ENCODE measurements at regions of chr16 and their contacts with region 1.

Region 1: GRCh38 chr16:21158208-21159110 is at the start of gene LDAF1:
- DNase-seq: peak; percentile 66 to 89
- H3K4me3 ChIP-seq: peak within 1 kb of the TSS; percentile 87
- H3K27ac ChIP-seq: peak within 1 kb of the TSS; percentile 74
- H3K4me1 ChIP-seq: peaks cover 16% of the 10 kb centered on the region
- H3K27me3 ChIP-seq: no peaks in the 10 kb centered on the region
- CTCF ChIP-seq: no peak
- total RNA-seq, gene LDAF1: 47.6 and 69.9 TPM in 2 replicates

Region 2: GRCh38 chr16:20900299-20901067 is 258.0 kb before region 1 on chr16 and contains the starts of genes DCUN1D3 and LYRM1:
- CTCF ChIA-PET with region 1: no interaction called
- POLR2A ChIA-PET with region 1: interaction called, 3 read pairs
- intact Hi-C with region 1: loop called (anchors 5 kb)
- DNase-seq: peak; percentile 90 to 94
- H3K4me3 ChIP-seq: peak within 1 kb of the TSS; percentile 84
- H3K27ac ChIP-seq: peak within 1 kb of the TSS; percentile 99
- H3K4me1 ChIP-seq: peaks cover 65% of the 10 kb centered on the region
- H3K27me3 ChIP-seq: no peaks in the 10 kb centered on the region
- CTCF ChIP-seq: no peak
- total RNA-seq, gene DCUN1D3: 11.8 and 14.6 TPM in 2 replicates
- total RNA-seq, gene LYRM1: 32.2 and 51.7 TPM in 2 replicates

Region 3: GRCh38 chr16:21184834-21185233 is 26.4 kb after region 1 on chr16:
- CTCF ChIA-PET with region 1: interaction called, 3 read pairs
- POLR2A ChIA-PET with region 1: no interaction called
- intact Hi-C with region 1: loop called (anchors 2 kb)
- DNase-seq: no peak
- H3K4me3 ChIP-seq: no peak overlapping the region
- H3K27ac ChIP-seq: no peak overlapping the region
- H3K4me1 ChIP-seq: peaks cover 11% of the 10 kb centered on the region; the same call in 1 of the 2 replicates
- H3K27me3 ChIP-seq: no peaks in the 10 kb centered on the region
- CTCF ChIP-seq: no peak

Region 4: GRCh38 chr16:21554795-21555585 is 396.5 kb after region 1 on chr16:
- CTCF ChIA-PET with region 1: no interaction called
- POLR2A ChIA-PET with region 1: no interaction called
- intact Hi-C with region 1: loop called (anchors 2 kb)
- DNase-seq: peak; percentile 68 to 93
- H3K4me3 ChIP-seq: peak overlapping the region; percentile 36; the same call in 1 of the 2 replicates
- H3K27ac ChIP-seq: no peak overlapping the region
- H3K4me1 ChIP-seq: 0 out of 2 replicates have a peak, but pooled peaks cover 3% of the 10 kb centered on the region
- H3K27me3 ChIP-seq: no peaks in the 10 kb centered on the region
- CTCF ChIP-seq: peak; percentile 99

Region 5: GRCh38 chr16:22321339-22322001 is 1163.0 kb after region 1 on chr16:
- CTCF ChIA-PET with region 1: interaction called, 7 read pairs
- POLR2A ChIA-PET with region 1: no interaction called
- intact Hi-C with region 1: loop called (anchors 1 kb)
- DNase-seq: peak; percentile 54 to 59
- H3K4me3 ChIP-seq: no peak overlapping the region
- H3K27ac ChIP-seq: no peak overlapping the region
- H3K4me1 ChIP-seq: no peaks in the 10 kb centered on the region
- H3K27me3 ChIP-seq: no peaks in the 10 kb centered on the region
- CTCF ChIP-seq: peak; percentile 94